Tibial artery (tissue), 4 donors: ENCODE measurements at regions of chr6 and their contacts with region 1.

Region 1: DNA sequence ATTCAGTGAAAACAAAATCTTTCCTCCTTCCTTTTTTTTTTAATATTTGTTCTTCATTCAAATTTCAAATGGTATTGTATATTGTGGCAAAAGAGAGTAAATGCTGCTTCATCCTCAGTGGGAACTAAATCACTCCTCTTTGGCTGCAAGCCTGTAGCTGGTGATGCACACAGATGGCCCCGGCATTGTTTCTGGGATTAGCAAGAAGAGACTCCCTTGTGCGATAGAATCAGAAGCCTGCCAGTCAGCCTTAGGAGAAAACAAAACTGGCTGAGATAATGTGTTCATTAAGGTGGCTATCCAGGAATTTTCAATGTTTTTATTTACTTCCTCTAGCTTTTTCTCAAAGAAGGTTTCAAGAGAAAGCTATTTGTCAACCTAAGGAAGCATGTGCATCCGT is 20.7 kb upstream of the ELOVL2 start:
- DNase-seq: no peak
- H3K4me3 ChIP-seq: no peak overlapping the region
- H3K27ac ChIP-seq: no peak overlapping the region
- H3K4me1 ChIP-seq: no peaks in the 10 kb centered on the region
- H3K27me3 ChIP-seq: no peaks in the 10 kb centered on the region
- CTCF ChIP-seq: no peak

Region 2: DNA sequence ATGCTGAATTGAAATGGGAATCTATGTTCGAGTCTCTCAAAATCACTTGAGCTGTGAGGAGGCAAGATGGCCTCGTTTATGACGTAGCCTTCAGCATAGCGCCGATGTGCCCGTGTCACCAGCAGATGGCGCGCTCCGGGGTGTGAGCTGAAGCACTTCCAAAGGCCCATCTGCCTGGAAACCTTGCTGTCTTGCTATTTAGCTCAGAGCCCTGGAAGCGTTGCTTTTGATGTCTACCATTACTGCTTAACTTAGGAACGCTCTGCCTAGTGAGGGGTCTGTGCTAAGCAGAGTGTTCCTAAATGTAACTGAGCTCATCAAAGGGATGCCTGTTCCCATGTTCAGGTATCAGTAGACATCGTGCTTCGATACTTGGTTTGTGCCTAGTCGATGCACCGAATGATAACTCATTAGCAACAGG is 110.2 kb before region 1 on chr6:
- intact Hi-C with region 1: loop called (anchors 10 kb)
- DNase-seq: peak in 1 of 2 donors; percentile 38
- H3K4me3 ChIP-seq: no peak overlapping the region
- H3K27ac ChIP-seq: no peak overlapping the region
- H3K4me1 ChIP-seq: no peaks in the 10 kb centered on the region
- H3K27me3 ChIP-seq: no peaks in the 10 kb centered on the region
- CTCF ChIP-seq: peak; percentile 36 to 38